ENCODE measurements at regions of chr20 and their contacts with region 1.

Region 1: GRCh38 chr20:18507218-18508021 is at the start of gene SEC23B:
- DNase-seq: peak; percentile 99
- ATAC-seq: peak; percentile 100
- H3K4me3 ChIP-seq: peak within 1 kb of the TSS; percentile 49 to 60
- H3K27ac ChIP-seq: peak within 1 kb of the TSS; percentile 45 to 84
- H3K4me1 ChIP-seq: no peaks in the 10 kb centered on the region
- H3K27me3 ChIP-seq: no peaks in the 10 kb centered on the region
- total RNA-seq, gene SEC23B: 30.6 to 37.5 TPM

Region 2: GRCh38 chr20:18005231-18006109 is 501.9 kb before region 1 on chr20:
- intact Hi-C with region 1: no loop called
- DNase-seq: no peak
- ATAC-seq: no peak
- H3K4me3 ChIP-seq: no peak overlapping the region
- H3K27ac ChIP-seq: no peak overlapping the region
- H3K4me1 ChIP-seq: no peaks in the 10 kb centered on the region
- H3K27me3 ChIP-seq: no peaks in the 10 kb centered on the region

Region 3: GRCh38 chr20:18287915-18288748 is 219.3 kb before region 1 on chr20 and contains the start of gene ZNF133:
- intact Hi-C with region 1: loop called in 1 of 2 experiments (anchors 5 kb)
- DNase-seq: peak; percentile 97 to 99
- ATAC-seq: peak; percentile 99
- H3K4me3 ChIP-seq: peak within 1 kb of the TSS; percentile 64 to 65
- H3K27ac ChIP-seq: peak within 1 kb of the TSS; percentile 37 to 51
- H3K4me1 ChIP-seq: peaks cover 2 to 5% of the 10 kb centered on the region in 2 donors
- H3K27me3 ChIP-seq: no peaks in the 10 kb centered on the region
- total RNA-seq, gene ZNF133: 11.9 to 19.0 TPM

Region 4: DNA sequence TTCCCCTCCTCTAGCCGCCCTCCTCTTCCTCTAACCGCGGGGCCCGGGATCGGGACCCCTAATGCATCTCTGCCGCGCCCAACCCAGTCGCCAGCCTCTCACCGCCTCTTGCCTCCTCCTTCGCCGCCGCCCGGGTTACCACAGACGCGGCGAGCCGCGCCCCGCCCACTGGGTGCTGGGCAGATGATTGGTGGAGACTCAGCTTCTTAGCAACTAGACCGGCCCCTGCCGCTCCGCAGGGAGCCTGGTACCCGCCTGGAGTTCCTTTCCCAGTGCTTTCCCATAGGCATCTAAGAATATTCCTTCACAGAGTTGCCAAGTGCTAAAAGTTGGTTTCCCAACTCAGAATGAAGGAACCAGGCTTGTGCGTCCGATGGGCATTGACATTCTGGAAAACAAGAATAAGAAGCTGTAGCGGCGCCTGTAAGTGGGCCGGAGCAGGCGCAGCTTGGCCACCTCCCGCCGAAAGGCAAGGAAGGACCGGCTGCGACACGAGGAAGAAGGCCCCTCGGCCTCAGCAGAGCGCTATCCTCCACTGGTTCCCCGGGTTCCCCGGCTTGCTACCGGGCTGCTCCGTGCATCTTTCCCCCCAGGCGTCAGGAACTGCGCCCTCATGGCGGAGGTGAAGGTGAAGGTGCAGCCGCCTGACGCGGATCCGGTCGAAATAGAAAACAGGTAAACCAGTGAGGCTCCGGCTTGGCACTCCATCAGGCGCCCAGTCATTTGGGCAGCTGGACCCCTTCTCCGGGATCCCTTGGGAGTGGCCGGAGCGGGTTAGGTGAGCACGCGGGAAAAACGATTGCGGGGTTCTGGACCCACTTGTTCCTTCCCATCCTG is 40.3 kb before region 1 on chr20 and contains the starts of genes DZANK1 and POLR3F:
- intact Hi-C with region 1: loop called (anchors 5 kb)
- DNase-seq: peak; percentile 98
- ATAC-seq: peak; percentile 100
- H3K4me3 ChIP-seq: peak within 1 kb of the TSS; percentile 57 to 60
- H3K27ac ChIP-seq: peak within 1 kb of the TSS in 1 of 2 donors; percentile 48
- H3K4me1 ChIP-seq: no peaks in the 10 kb centered on the region
- H3K27me3 ChIP-seq: no peaks in the 10 kb centered on the region
- total RNA-seq, gene DZANK1: 2.3 to 2.5 TPM
- total RNA-seq, gene POLR3F: 7.3 to 8.2 TPM

Region 5: GRCh38 chr20:18496740-18497592 is 10.5 kb before region 1 on chr20 and contains the start of gene RBBP9:
- intact Hi-C with region 1: loop called in 1 of 2 experiments (anchors 1 kb)
- DNase-seq: peak; percentile 93 to 96
- ATAC-seq: peak; percentile 97
- H3K4me3 ChIP-seq: peak within 1 kb of the TSS; percentile 44 to 86
- H3K27ac ChIP-seq: peak within 1 kb of the TSS in 1 of 2 donors; percentile 55
- H3K4me1 ChIP-seq: no peaks in the 10 kb centered on the region
- H3K27me3 ChIP-seq: no peaks in the 10 kb centered on the region
- total RNA-seq, gene RBBP9: 13.6 to 17.7 TPM

Region 6: GRCh38 chr20:18566892-18567742 is 59.7 kb after region 1 on chr20 and contains the start of gene SMIM26:
- intact Hi-C with region 1: loop called in 1 of 2 experiments (anchors 5 kb)
- DNase-seq: peak; percentile 96 to 99
- ATAC-seq: peak; percentile 97
- H3K4me3 ChIP-seq: peak within 1 kb of the TSS; percentile 53 to 64
- H3K27ac ChIP-seq: peak within 1 kb of the TSS in 1 of 2 donors; percentile 85
- H3K4me1 ChIP-seq: no peaks in the 10 kb centered on the region
- H3K27me3 ChIP-seq: no peaks in the 10 kb centered on the region
- total RNA-seq, gene SMIM26: 46.0 to 51.5 TPM

Measured in aorta (tissue), 5 donors.